Activated CD4-positive, alpha-beta memory T cell treated with anti-CD3 and anti-CD28 coated beads, Interleukin-2, amount 10 ng/mL, durations not matched to agents 7 days and 5 days (primary cell): ENCODE measurements at regions of chr11 and their contacts with region 1.

Region 1: GRCh38 chr11:116835791-116836631 is 1.4 kb downstream of the APOA1 start:
- DNase-seq: peak; percentile 86
- H3K4me3 Mint-ChIP-seq: peak overlapping the region; percentile 61
- H3K27ac Mint-ChIP-seq: peak overlapping the region; percentile 26
- H3K4me1 Mint-ChIP-seq: peaks cover 18% of the 10 kb centered on the region
- H3K27me3 Mint-ChIP-seq: no peaks in the 10 kb centered on the region

Region 2: GRCh38 chr11:116772443-116773202 is 63.4 kb before region 1 on chr11 and contains the start of gene BUD13:
- CTCF ChIA-PET with region 1: interaction called, 15 read pairs
- POLR2A ChIA-PET with region 1: interaction called, 9 read pairs
- DNase-seq: peak; percentile 94
- H3K4me3 Mint-ChIP-seq: peak within 1 kb of the TSS; percentile 97
- H3K27ac Mint-ChIP-seq: peak within 1 kb of the TSS; percentile 91
- H3K4me1 Mint-ChIP-seq: peaks cover 59% of the 10 kb centered on the region
- H3K27me3 Mint-ChIP-seq: no peaks in the 10 kb centered on the region
- total RNA-seq, gene BUD13: 34.1 to 35.1 TPM

Region 3: DNA sequence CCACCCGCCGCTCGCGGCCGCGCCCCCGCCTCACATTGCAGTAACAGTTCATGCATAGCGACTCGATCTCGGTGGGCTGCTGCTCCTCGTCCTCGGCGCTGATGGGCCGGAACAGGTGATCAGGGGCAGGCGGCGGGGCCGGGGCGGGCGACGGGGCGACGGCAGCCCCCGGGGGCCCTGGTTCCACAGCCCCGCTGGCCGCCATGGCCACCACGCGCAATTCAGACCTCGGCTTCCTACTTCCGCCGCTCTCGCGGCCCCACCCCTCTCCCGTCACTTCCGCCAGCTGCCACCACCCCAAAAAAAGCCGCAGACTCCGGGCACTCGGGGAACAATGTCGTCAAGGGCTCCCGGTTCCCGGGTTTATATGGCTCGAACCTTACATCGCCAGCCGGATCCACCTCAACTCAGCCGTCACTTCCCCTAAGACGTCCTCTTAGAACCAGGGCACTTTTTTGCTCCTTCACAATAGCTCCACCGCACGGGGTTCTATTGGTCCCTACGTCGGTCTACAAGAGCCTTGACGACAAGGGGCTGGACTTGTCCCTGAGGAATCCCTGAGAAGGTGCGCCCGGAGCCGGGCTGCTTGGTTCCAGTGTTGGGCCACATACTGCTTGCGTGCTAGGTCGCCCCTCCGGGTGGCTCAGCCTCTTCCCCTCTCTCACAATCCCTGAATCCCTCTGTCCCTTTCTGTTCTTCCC is 48.1 kb before region 1 on chr11 and contains the start of gene ZPR1:
- CTCF ChIA-PET with region 1: interaction called, 158 read pairs
- POLR2A ChIA-PET with region 1: interaction called, 16 read pairs
- DNase-seq: peak; percentile 89
- H3K4me3 Mint-ChIP-seq: peak within 1 kb of the TSS; percentile 91
- H3K27ac Mint-ChIP-seq: peak within 1 kb of the TSS; percentile 82
- H3K4me1 Mint-ChIP-seq: peaks cover 52% of the 10 kb centered on the region
- H3K27me3 Mint-ChIP-seq: peaks cover 9% of the 10 kb centered on the region
- total RNA-seq, gene ZPR1: 55.6 to 57.6 TPM

Region 4: GRCh38 chr11:116823031-116823843 is 12.8 kb before region 1 on chr11 and contains the start of gene APOA4:
- CTCF ChIA-PET with region 1: interaction called, 18 read pairs
- POLR2A ChIA-PET with region 1: no interaction called
- DNase-seq: no peak
- H3K4me3 Mint-ChIP-seq: no peak within 1 kb of the TSS
- H3K27ac Mint-ChIP-seq: no peak within 1 kb of the TSS
- H3K4me1 Mint-ChIP-seq: no peaks in the 10 kb centered on the region
- H3K27me3 Mint-ChIP-seq: no peaks in the 10 kb centered on the region
- total RNA-seq, gene APOA4: not detected

Region 5: DNA sequence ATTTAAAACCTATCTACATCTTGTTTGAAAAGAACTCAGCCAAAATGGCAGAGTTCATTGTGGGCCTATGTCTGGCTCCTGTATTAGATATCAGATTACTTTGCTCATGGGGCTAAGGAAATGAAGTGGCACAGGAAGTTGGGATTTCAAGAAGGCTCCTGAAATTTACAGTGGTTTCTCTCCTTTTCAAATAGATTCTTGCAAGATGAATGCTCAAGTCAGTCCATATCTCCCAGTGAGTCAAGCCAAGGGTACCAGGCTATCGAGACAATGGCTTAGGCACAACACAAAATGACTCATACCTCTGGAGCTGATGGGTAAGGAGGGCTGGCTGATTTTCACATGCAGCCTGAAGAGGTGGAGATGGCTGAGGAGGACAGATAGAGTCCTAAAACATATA is 25.5 kb after region 1 on chr11:
- CTCF ChIA-PET with region 1: interaction called, 116 read pairs
- POLR2A ChIA-PET with region 1: interaction called, 4 read pairs
- DNase-seq: no peak
- H3K4me3 Mint-ChIP-seq: no peak overlapping the region
- H3K27ac Mint-ChIP-seq: no peak overlapping the region
- H3K4me1 Mint-ChIP-seq: peaks cover 10% of the 10 kb centered on the region
- H3K27me3 Mint-ChIP-seq: no peaks in the 10 kb centered on the region

Region 6: DNA sequence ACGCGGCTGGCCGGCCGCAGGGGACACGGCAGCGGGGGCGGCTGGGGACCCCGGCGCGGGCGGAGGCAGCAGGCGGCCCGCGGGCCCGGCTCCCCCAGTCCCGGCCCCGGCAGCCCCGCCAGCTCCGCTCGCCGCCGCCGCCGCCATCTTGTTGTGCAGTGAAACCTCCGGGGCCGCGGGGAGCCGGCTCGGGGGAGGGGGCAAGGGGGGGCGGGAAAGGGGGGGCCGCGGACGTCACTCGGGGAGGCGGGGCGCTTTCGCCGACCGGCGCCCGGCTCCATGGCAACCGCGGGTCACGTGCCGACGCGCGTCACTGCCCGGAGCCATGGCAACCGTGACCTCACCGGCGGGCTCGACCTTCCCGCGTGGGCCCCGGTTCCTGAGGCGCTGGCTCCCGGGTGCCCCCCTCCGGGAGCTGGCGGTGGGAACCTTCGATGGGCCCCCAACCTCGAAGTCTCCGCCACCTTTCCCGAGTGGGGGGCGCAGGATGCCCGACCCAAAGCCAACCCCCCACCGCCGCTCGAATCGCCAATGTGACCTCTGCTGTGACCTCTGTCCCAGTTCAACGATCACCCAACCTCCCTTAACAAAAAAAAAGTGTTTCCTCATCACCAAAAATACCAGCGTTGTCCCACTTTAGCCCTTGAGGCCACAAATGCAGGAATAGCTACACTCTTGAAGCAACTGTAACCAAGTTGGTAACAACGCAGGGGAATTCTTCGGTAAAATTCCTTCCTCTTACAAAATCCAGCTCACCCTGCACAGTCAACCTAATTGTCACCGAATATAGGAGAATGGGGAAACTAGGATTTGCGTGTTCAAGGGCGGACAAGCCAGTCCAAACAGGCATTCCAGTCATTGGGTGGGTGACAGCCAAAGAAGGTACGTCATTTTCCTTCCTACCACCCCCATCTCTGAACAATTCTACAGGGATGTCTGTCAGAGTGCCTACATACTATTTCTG is 262.5 kb after region 1 on chr11 and contains the start of gene SIK3:
- CTCF ChIA-PET with region 1: interaction called, 13 read pairs
- POLR2A ChIA-PET with region 1: interaction called, 9 read pairs
- DNase-seq: peak; percentile 93
- H3K4me3 Mint-ChIP-seq: peak within 1 kb of the TSS; percentile 90
- H3K27ac Mint-ChIP-seq: peak within 1 kb of the TSS; percentile 84
- H3K4me1 Mint-ChIP-seq: peaks cover 61% of the 10 kb centered on the region
- H3K27me3 Mint-ChIP-seq: no peaks in the 10 kb centered on the region
- total RNA-seq, gene SIK3: 36.4 to 43.0 TPM

Region 7: GRCh38 chr11:117178210-117179034 is 342.4 kb after region 1 on chr11 and contains the start of gene SIDT2:
- CTCF ChIA-PET with region 1: interaction called, 11 read pairs
- POLR2A ChIA-PET with region 1: interaction called, 3 read pairs
- DNase-seq: peak; percentile 93
- H3K4me3 Mint-ChIP-seq: peak within 1 kb of the TSS; percentile 92
- H3K27ac Mint-ChIP-seq: peak within 1 kb of the TSS; percentile 85
- H3K4me1 Mint-ChIP-seq: peaks cover 32% of the 10 kb centered on the region
- H3K27me3 Mint-ChIP-seq: no peaks in the 10 kb centered on the region
- total RNA-seq, gene SIDT2: 38.1 to 42.9 TPM